ENCODE measurements at regions of chr14 and their contacts with region 1.

Region 1: GRCh38 chr14:80055667-80056496 is 155.4 kb downstream of the DIO2 start:
- DNase-seq: peak; percentile 20 to 68
- H3K4me3 ChIP-seq: peak overlapping the region; percentile 13 to 21
- H3K27ac ChIP-seq: peak overlapping the region in 1 of 2 donors; percentile 0
- H3K4me1 ChIP-seq: peaks cover 0 to 10% (median 0%) of the 10 kb centered on the region in 4 donors
- H3K27me3 ChIP-seq: no peaks in the 10 kb centered on the region
- CTCF ChIP-seq: peak; percentile 58 to 68

Region 2: DNA sequence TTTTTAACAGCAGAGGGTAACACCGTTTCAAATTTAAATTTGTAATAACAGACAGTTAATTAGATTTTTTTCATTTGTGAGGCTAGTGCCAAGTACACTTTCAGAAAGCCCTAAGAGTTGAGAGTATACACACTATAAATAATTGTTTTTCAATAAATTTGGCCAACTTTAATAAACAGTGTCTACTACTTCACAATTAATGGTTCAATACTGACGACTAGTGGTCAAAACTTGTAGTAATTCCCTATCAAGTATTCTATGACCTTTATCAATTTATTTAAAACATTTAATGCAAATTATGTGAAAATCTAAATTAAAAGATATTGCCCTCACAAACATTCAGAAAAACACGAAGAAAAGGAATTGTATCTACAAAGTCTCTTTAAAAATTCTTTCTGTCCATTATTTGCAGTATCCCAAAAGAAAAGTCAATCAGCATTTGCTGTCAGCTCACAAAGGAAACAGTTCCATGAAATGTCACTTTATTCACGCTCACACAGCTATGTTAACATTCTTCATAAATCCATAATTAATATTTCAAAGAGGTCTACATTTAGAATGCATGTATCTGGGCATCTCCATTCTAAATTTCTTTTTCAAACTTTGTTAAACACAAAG is 794.4 kb after region 1 on chr14:
- intact Hi-C with region 1: loop called (anchors 10 kb)
- DNase-seq: no peak
- H3K4me3 ChIP-seq: no peak overlapping the region
- H3K27ac ChIP-seq: no peak overlapping the region
- H3K4me1 ChIP-seq: peaks cover 0 to 9% (median 2%) of the 10 kb centered on the region in 4 donors
- H3K27me3 ChIP-seq: no peaks in the 10 kb centered on the region
- CTCF ChIP-seq: peak; percentile 49 to 51

Measured in tibial artery (tissue), 4 donors.